ENCODE measurements at regions of chr9 and their contacts with region 1.

Region 1: GRCh38 chr9:124617471-124618141 is 110.4 kb upstream of the NR5A1 start:
- DNase-seq: peak; percentile 85
- H3K4me3 ChIP-seq: no peak overlapping the region
- H3K27ac ChIP-seq: no peak overlapping the region
- H3K4me1 ChIP-seq: no peaks in the 10 kb centered on the region
- H3K27me3 ChIP-seq: no peaks in the 10 kb centered on the region
- CTCF ChIP-seq: peak; percentile 80 to 89 (median 84)
- EP300 ChIP-seq: no peak
- POLR2A ChIP-seq: no peak

Region 2: DNA sequence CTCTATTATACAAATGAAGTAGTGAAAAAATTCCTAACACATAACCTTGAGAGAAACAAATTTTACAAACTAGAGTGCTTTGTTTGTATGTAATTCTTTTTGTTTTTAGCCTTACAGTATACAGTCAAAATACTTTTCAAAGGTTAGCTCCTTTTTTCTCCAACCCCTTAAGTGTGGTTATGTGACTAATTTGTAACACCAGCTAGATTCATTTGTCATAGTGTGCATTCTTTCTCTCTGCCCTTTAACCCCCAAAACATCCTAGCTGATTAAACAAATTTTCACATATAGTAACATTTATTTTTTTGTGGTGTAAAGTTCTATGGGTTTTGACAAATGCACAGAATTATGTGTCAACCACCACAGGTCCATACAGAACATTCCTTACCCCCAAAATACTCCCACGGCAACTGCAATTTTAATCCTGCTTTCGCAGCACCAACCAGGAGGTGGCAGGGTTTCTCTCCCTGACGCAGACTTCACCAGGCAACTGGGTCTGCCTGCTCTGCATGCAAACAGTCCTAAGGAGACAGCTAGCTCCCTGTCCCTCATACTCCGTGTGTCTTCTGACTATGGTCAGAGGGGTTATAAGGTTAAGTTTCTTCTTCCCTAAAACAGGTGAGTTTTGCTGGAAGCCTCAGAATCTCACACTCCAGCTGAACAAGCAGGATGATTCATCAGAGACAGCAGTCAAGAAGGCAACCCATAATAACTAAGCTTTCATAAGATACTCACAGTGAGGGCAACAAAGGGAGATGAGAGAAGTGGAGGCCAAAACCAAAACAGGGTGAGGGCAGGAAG is 65.9 kb before region 1 on chr9:
- intact Hi-C with region 1: no loop called
- DNase-seq: no peak
- H3K4me3 ChIP-seq: no peak overlapping the region
- H3K27ac ChIP-seq: no peak overlapping the region
- H3K4me1 ChIP-seq: peaks cover 0 to 6% (median 0%) of the 10 kb centered on the region in 4 donors
- H3K27me3 ChIP-seq: no peaks in the 10 kb centered on the region
- CTCF ChIP-seq: peak in 3 of 4 experiments; percentile 12 to 29 (median 26)
- EP300 ChIP-seq: no peak
- POLR2A ChIP-seq: no peak

Region 3: DNA sequence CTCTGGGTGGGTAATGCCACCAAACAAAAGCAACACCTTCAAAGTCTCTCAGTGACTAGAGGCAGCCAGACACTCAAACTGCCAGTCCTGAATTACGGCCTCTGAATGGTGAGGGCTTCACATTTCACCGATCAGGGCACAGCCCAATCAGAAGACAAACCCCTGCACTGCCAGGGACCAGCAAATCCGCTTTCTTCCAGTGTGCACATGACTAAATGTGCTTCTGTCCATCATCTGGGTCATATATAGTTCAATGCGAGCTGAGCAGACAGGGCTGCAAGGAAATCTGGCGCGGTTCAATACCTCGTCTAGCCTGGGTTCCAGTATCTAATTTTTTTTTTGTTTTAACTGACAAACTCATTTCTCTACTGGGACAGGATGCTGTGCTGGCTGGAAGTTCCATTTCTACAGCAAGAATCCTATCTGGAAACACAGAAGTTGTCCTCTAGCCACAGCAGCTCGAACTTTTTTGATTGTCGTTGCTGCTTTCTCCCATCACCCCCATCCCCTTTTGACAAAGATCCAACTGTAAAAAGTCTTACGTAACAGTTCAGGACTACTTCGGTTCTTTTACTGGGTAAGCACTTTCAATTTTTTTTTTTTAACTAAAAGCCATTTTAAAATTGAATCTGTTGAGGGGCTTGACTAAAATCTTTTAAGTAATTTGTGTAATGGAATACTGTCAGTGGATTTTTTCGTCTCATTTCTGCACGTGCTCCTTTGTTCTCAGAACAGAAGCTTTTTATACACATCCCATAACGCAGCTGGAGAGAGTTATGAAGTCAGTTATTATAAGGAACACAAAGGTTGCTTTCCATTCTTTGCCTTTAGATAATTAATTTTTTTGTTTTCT is 40.8 kb after region 1 on chr9:
- intact Hi-C with region 1: loop called (anchors 5 kb)
- DNase-seq: peak; percentile 73
- H3K4me3 ChIP-seq: peak overlapping the region; percentile 44 to 56 (median 50)
- H3K27ac ChIP-seq: peak overlapping the region; percentile 76 to 84 (median 78)
- H3K4me1 ChIP-seq: peaks cover 0 to 17% (median 14%) of the 10 kb centered on the region in 4 donors
- H3K27me3 ChIP-seq: no peaks in the 10 kb centered on the region
- CTCF ChIP-seq: no peak
- EP300 ChIP-seq: no peak
- POLR2A ChIP-seq: no peak

Region 4: GRCh38 chr9:124708633-124709291 is 91.2 kb after region 1 on chr9:
- intact Hi-C with region 1: loop called (anchors 1 kb)
- DNase-seq: no peak
- H3K4me3 ChIP-seq: no peak overlapping the region
- H3K27ac ChIP-seq: no peak overlapping the region
- H3K4me1 ChIP-seq: peaks cover 0 to 11% (median 2%) of the 10 kb centered on the region in 4 donors
- H3K27me3 ChIP-seq: no peaks in the 10 kb centered on the region
- CTCF ChIP-seq: no peak
- EP300 ChIP-seq: no peak
- POLR2A ChIP-seq: no peak

Region 5: GRCh38 chr9:124852829-124853531 is 235.4 kb after region 1 on chr9 and contains the start of gene WDR38:
- intact Hi-C with region 1: loop called (anchors 10 kb)
- DNase-seq: peak; percentile 85
- H3K4me3 ChIP-seq: peak within 1 kb of the TSS; percentile 28 to 55 (median 42)
- H3K27ac ChIP-seq: peak within 1 kb of the TSS; percentile 55 to 69 (median 58)
- H3K4me1 ChIP-seq: peaks cover 0 to 27% (median 20%) of the 10 kb centered on the region in 4 donors
- H3K27me3 ChIP-seq: no peaks in the 10 kb centered on the region
- CTCF ChIP-seq: peak; percentile 99 to 100 (median 100)
- EP300 ChIP-seq: no peak
- POLR2A ChIP-seq: no peak
- total RNA-seq, gene WDR38: not detected

Measured in sigmoid colon (tissue), 7 donors.